Activated CD8-positive, alpha-beta T cell treated with anti-CD3 and anti-CD28 coated beads for 36 hours (primary cell): ENCODE measurements at regions of chr11 and their contacts with region 1.

Region 1: DNA sequence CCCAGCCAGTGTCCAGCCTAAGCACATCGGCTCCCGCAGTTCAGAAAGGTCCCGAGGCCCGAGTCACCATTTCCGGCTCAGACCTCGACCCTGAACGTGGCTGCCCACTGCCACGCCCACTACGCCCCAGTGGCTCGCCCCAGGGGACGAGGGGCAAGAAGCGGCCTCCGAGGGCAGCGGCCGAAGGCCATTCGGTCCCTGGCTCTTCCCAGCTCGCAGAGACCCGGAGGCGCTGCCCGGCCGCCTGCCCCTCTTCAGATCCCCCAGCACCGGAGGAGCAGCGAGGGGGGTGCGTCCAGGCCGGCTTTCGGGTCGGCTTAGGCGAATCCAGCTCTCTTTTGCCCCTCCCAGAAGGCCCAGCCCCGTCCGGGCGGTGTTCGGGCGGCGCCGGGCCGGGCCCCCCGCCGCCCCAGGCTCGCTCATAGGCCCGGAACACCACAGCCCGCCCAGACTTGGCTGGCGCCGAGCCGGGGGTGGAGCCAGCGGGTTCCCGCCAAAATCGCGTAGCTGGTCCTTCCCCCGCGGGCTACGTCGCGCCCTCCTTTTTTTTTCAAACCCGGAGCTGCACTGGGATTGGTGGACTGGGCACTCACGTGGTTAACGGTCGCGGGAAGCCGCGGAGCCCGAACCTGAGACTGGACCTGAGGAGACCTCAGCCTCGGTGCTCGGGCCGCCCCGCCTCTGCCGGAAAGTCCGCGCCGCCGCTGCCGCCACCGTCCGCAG is at the start of gene WEE1:
- DNase-seq: peak; percentile 98
- ATAC-seq: peak; percentile 96
- H3K4me3 Mint-ChIP-seq: peak within 1 kb of the TSS; percentile 83
- H3K27ac Mint-ChIP-seq: peak within 1 kb of the TSS; percentile 81
- H3K4me1 Mint-ChIP-seq: peaks cover 18% of the 10 kb centered on the region
- H3K27me3 Mint-ChIP-seq: peaks cover 8% of the 10 kb centered on the region
- CTCF ChIP-seq: no peak
- total RNA-seq, gene WEE1: 45.2 to 49.2 TPM

Region 2: GRCh38 chr11:9601037-9601875 is 28.0 kb after region 1 on chr11:
- CTCF ChIA-PET with region 1: interaction called, 8 read pairs
- POLR2A ChIA-PET with region 1: interaction called, 14 read pairs
- intact Hi-C with region 1: no loop called
- DNase-seq: peak; percentile 92
- ATAC-seq: peak; percentile 87
- H3K4me3 Mint-ChIP-seq: peak overlapping the region; percentile 60
- H3K27ac Mint-ChIP-seq: peak overlapping the region; percentile 87
- H3K4me1 Mint-ChIP-seq: peaks cover 31% of the 10 kb centered on the region
- H3K27me3 Mint-ChIP-seq: peaks cover 3% of the 10 kb centered on the region
- CTCF ChIP-seq: no peak

Region 3: GRCh38 chr11:9692691-9693090 is 119.5 kb after region 1 on chr11:
- CTCF ChIA-PET with region 1: no interaction called
- POLR2A ChIA-PET with region 1: no interaction called
- intact Hi-C with region 1: no loop called
- DNase-seq: no peak
- ATAC-seq: no peak
- H3K4me3 Mint-ChIP-seq: no peak overlapping the region
- H3K27ac Mint-ChIP-seq: no peak overlapping the region
- H3K4me1 Mint-ChIP-seq: no peaks in the 10 kb centered on the region
- H3K27me3 Mint-ChIP-seq: no peaks in the 10 kb centered on the region
- CTCF ChIP-seq: no peak

Region 4: GRCh38 chr11:9757809-9758636 is 184.8 kb after region 1 on chr11:
- CTCF ChIA-PET with region 1: interaction called, 4 read pairs
- POLR2A ChIA-PET with region 1: interaction called, 11 read pairs
- intact Hi-C with region 1: no loop called
- DNase-seq: peak; percentile 95
- ATAC-seq: peak; percentile 64
- H3K4me3 Mint-ChIP-seq: peak overlapping the region; percentile 88
- H3K27ac Mint-ChIP-seq: peak overlapping the region; percentile 87
- H3K4me1 Mint-ChIP-seq: peaks cover 53% of the 10 kb centered on the region
- H3K27me3 Mint-ChIP-seq: no peaks in the 10 kb centered on the region
- CTCF ChIP-seq: peak; percentile 93